Transverse colon (tissue), 4 donors: ENCODE measurements at regions of chr7 and their contacts with region 1.

Region 1: GRCh38 chr7:133512560-133512959 is 259.7 kb downstream of the EXOC4 start:
- DNase-seq: no peak
- H3K4me3 ChIP-seq: no peak overlapping the region
- H3K27ac ChIP-seq: no peak overlapping the region
- H3K4me1 ChIP-seq: peaks cover 0 to 3% (median 0%) of the 10 kb centered on the region in 4 donors
- H3K27me3 ChIP-seq: no peaks in the 10 kb centered on the region
- CTCF ChIP-seq: no peak
- EP300 ChIP-seq: no peak
- POLR2A ChIP-seq: no peak

Region 2: DNA sequence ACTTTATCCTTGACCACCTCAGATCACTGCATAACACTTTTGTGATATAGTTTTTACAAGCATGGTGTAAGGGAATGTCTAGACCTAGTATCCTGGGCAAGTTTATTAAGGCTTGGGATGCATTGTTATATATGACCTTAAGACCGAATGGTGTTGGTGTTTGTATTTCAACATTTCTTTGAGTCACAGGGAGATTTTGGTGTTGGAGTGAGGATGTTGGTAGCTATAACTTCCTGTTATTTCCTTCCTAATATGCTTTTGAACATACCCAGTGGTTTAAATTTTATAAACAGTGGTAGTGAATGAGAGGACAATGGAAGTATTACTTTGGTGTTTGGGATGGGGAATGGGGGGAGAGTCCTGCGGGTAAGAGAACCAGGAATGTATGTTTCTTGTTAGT is 257.1 kb before region 1 on chr7:
- in situ Hi-C with region 1: no loop called
- intact Hi-C with region 1: loop called (anchors 5 kb)
- DNase-seq: no peak
- H3K4me3 ChIP-seq: no peak overlapping the region
- H3K27ac ChIP-seq: no peak overlapping the region
- H3K4me1 ChIP-seq: peaks cover 0 to 33% (median 5%) of the 10 kb centered on the region in 4 donors
- H3K27me3 ChIP-seq: no peaks in the 10 kb centered on the region
- CTCF ChIP-seq: no peak
- EP300 ChIP-seq: no peak
- POLR2A ChIP-seq: no peak